ENCODE measurements at regions of chr5 and their contacts with region 1.

Region 1: GRCh38 chr5:139633295-139634027 is 14.7 kb upstream of the CXXC5 start:
- DNase-seq: peak; percentile 77
- ATAC-seq: peak; percentile 23

Region 2: DNA sequence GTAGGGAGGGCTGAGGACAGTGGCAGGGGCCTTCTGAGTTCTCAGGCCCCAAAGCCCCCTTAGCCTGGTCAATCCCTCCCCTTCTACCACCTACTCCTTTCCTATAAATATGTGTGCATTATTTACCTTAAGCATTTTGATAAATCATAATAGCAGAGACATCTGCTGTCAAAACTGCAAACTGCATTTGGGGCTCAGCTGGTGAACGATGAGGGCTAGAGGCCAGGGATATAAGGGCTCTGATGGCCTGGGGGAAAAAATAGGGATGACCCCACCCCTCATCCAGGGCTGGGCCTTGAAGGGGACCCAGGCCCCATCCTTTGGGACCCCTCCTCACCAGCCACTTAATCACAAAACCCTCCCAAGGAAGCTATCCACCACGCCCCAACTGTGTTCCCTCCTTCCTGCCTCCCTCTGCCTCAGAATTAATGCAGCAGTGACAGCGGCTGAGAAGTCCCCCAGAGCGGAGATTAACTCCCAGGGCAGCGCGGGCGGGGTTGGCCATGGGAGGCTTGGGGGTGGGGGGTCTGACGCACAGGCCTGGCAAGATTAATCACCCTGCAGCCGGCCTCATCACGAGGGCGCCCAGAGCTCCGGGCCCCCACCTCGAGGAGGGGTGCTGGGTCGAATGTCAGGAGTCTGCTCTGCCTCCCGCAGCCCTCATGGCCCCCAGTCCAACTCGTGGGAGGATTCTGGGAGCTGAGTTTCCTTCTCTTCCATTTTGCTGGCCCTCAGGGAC is 56.8 kb after region 1 on chr5:
- intact Hi-C with region 1: loop called (anchors 5 kb)
- DNase-seq: no peak
- ATAC-seq: peak; percentile 20

Region 3: GRCh38 chr5:139711067-139711905 is 77.8 kb after region 1 on chr5:
- intact Hi-C with region 1: no loop called
- DNase-seq: peak; percentile 55
- ATAC-seq: peak; percentile 46

Region 4: GRCh38 chr5:139765409-139766217 is 132.2 kb after region 1 on chr5:
- intact Hi-C with region 1: loop called (anchors 2 kb)
- DNase-seq: peak; percentile 90
- ATAC-seq: peak; percentile 96

Region 5: DNA sequence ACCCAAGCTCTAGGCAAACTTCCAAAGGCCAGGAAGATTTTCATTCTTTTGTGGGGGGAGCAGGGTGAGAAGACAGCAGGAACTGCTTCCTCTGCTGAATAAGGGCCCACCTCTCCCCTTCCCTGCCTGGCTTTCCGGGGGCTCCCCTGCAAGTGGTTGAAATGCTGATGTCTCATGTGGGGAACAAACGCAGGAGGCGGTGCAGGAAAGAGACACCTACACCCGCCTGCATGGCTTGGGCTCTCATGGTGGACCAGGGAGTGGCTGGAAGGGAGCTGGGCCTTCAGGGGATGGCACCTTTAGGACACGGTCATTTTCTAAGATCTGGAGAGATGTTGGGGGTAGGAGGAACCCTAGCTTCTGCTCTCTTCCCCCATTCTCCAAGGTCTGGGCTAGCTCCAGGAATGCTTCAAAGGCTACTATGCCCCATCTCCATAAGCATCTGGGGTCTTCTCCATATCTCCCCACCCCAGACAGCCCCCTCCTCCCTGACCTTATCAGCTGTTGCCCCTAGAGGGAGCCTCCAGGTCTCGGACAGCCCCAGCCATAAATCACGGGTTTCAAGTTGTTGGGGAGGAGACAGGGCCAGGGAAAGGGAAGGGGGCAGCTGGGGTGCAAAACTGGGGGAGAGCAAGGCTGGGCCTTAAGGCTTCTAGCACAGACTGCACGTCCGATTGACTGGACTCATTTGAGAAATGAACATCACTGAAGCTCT is 238.7 kb after region 1 on chr5:
- intact Hi-C with region 1: no loop called
- DNase-seq: peak; percentile 27
- ATAC-seq: no peak

Region 6: DNA sequence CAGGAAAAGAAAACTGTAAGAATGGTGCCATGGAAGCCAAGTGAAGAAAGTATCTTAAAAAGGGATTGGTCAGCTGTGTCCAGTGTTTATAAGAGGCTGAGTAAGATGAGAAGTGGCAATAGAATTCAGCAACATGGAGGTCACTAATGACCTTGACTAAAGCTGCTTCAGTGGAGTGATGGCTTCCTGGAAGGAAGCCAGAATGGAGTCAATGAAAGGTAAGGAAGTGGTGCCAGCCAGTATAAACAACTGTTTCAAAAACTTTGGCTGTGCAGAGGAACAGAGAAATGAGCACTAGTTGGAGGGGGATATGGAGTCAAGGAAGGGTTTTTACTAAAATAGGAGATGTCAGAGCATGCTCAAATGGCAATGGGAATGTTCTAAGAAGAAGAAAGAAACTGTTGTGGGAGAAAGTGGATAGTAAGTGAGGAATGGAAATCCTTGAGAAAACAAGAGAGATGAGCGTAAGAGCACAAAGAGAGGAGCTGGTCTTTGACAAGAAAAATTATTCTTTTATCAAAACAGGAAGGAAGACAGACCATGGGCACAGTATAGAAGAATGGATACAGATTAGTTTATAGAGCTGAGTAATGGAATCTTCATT is 420.7 kb after region 1 on chr5:
- intact Hi-C with region 1: no loop called
- DNase-seq: no peak
- ATAC-seq: no peak

Region 7: DNA sequence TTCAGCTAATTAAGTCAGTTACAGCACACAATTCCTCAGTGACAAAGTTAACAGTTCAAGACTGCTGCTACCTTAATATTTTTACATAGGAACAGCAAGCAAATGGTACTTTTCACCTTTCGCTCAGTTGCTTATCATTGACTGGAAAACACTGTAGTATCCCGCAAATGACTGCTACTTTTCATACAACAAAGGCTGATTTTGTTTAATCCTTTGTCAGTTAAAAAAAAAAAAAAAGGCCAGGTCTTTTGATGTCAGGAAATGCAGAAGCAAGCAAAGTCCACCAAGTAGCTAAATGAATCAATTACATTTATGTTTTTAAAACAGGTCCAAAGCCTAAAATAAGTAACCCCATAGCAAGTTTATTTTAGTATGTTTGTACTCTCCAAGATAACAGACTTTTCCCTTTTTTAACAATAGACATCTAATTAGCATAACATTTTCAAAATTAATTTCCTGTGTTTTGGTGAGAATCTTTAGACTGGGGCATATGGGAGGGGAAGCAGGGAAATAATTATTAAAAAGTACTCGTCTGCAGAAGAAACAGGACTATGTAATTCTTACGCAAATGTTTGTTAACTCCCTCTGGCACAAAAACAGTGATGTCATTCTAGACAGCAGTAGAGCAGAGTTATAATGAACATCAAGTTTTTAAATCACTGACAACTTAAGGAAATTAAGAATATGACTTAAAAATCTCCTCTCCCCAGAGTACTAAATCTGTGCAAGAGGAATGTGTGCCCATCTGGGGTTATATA is 659.8 kb after region 1 on chr5:
- intact Hi-C with region 1: no loop called
- DNase-seq: no peak
- ATAC-seq: peak; percentile 48